ENCODE measurements at regions of chr17 and their contacts with region 1.

Region 1: GRCh38 chr17:46061435-46061834 is 62.4 kb downstream of the STH start:
- DNase-seq: no peak
- ATAC-seq: no peak
- H3K4me3 ChIP-seq: no peak overlapping the region
- H3K27ac ChIP-seq: no peak overlapping the region
- H3K4me1 ChIP-seq: peaks cover 6% of the 10 kb centered on the region; the same call in 1 of the 2 replicates
- H3K27me3 ChIP-seq: no peaks in the 10 kb centered on the region
- CTCF ChIP-seq: peak; percentile 30
- POLR2A ChIP-seq: no peak
- RAD21 ChIP-seq: peak; percentile 14; the same call in 1 of the 2 replicates

Region 2: DNA sequence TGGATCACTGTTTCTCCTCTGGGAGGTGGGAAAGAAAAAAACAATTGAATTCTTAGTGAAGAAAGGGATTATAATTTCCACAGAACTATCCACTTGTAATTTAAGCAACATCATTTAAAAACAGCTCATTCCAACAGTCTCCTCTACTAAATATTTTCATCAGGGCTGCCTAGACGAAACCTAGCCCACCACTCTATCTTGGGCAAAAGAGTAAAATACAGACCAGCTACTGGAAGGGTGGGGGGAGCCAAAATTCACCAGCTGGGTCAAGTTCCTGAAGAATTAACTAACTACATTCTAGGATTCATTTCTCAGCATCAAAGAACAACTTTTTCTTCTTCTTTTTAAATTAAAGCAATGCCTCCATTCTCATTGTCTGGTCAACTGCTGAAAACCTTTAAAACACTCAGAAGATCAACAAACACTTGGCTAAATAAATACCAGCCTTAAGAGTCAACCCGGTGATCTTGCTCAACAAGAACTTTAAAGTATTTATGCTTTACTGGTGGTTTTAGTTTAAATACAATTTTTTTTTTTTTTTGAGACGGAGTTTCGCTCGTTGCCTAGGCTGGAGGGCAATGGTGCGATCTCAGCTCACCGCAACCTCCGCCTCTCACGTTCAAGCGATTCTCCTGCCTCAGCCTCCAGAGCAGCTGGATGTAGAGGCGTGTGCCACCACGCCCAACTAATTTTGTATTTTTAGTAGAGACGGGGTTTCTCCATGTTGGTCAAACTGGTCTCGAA is 106.6 kb after region 1 on chr17:
- CTCF ChIA-PET with region 1: no interaction called
- POLR2A ChIA-PET with region 1: no interaction called
- dilution Hi-C with region 1: no loop called
- in situ Hi-C with region 1: no loop called
- intact Hi-C with region 1: loop called (anchors 5 kb)
- DNase-seq: peak; percentile 90
- ATAC-seq: peak; percentile 90
- H3K4me3 ChIP-seq: peak overlapping the region; percentile 29; the same call in 1 of the 2 replicates
- H3K27ac ChIP-seq: peak overlapping the region; percentile 77
- H3K4me1 ChIP-seq: peaks cover 25% of the 10 kb centered on the region
- H3K27me3 ChIP-seq: no peaks in the 10 kb centered on the region
- CTCF ChIP-seq: no peak
- POLR2A ChIP-seq: no peak
- RAD21 ChIP-seq: no peak

Region 3: DNA sequence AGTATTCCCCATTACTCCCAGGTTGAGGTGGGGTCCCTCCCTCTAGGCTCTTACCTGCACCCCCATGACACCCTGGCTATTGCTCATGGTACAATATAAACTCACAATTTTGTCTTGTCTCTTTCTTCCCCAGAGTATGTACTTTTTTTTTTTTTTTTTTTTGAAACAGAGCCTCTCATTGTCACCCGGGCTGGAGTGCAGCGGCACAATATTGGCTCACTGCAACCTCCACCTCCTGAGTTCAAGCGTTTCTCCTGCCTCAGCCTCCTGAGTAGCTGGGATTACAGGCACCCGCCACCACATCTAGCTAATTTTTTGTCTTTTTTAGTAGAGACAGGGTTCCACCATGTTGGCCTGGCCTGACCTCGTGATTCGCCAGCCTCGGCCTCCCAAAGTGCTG is 123.3 kb after region 1 on chr17:
- CTCF ChIA-PET with region 1: interaction called, 3 read pairs
- POLR2A ChIA-PET with region 1: no interaction called
- dilution Hi-C with region 1: no loop called
- in situ Hi-C with region 1: no loop called
- intact Hi-C with region 1: loop called (anchors 5 kb)
- DNase-seq: no peak
- ATAC-seq: no peak
- H3K4me3 ChIP-seq: no peak overlapping the region
- H3K27ac ChIP-seq: no peak overlapping the region
- H3K4me1 ChIP-seq: peaks cover 6% of the 10 kb centered on the region; the same call in 1 of the 2 replicates
- H3K27me3 ChIP-seq: no peaks in the 10 kb centered on the region
- CTCF ChIP-seq: no peak
- POLR2A ChIP-seq: no peak
- RAD21 ChIP-seq: no peak